ENCODE measurements at regions of chr3 and their contacts with region 1.

Region 1: DNA sequence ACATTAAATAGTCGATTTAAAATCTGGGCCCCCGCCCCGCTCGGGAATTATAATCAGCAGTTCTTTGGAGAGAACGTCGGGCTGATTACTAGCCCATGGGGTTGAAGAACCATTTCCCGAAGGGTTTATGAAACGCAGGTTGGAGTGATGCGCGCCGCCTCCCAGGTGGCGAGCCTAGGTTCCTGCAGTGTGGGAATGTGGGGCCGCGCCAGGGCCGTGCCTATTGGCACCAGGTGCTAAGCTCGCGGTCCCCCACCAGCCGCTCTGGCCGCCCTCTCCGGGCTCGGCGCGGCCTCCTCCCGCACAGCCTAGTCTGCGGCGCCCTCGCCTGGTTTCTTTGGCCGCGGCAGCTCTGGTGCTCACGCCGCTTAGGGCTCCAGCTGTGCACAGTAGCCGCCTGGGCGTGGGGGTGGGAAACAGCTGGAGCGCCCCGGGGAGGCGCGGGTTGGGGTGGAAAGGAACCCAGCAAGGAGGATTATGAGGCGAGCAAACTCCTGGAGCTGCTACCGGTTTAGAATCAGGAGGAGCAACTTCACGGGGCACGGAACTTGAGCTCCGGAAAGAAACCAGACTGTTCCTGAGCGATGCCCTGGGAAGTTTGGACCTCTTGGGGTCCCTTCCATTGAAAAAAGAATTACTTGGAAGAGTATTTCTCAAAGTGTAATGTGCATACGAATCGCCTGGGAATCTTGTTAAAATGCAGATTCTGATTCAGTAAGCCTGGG is 5.6 kb upstream of the MECOM start:
- DNase-seq: peak; percentile 69
- H3K4me3 ChIP-seq: peak overlapping the region; percentile 21
- H3K27ac ChIP-seq: no peak overlapping the region
- H3K4me1 ChIP-seq: peaks cover 16% of the 10 kb centered on the region
- H3K27me3 ChIP-seq: peaks cover 97% of the 10 kb centered on the region
- CTCF ChIP-seq: peak; percentile 82

Region 2: DNA sequence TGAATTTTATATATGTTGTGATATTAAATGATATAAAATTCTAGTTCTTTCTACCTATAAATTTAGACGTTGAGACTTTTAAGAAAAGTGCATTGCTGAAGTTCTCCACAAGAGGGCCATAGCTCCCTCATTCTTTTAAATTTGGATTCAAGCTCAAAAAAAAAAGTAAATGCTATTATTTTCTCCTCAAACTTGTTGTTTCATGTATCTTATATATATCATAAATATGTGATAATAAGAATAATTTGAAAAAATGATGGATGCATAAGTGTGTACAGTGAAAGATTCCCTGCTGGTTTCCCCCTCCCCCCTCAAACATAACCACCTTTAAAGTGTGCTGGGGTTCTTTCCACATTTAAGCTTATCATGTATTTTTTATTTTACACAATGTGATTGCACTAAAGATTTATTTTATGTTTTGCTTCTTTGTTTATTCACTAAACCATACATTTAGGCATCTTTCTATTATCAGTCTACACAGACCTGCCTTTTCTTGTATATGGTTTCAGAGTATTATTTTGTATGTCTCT is 804.0 kb before region 1 on chr3:
- CTCF ChIA-PET with region 1: interaction called, 6 read pairs
- POLR2A ChIA-PET with region 1: no interaction called
- intact Hi-C with region 1: loop called (anchors 5 kb)
- DNase-seq: peak; percentile 24
- H3K4me3 ChIP-seq: no peak overlapping the region
- H3K27ac ChIP-seq: no peak overlapping the region
- H3K4me1 ChIP-seq: no peaks in the 10 kb centered on the region
- H3K27me3 ChIP-seq: peaks cover 81% of the 10 kb centered on the region
- CTCF ChIP-seq: peak; percentile 81

Region 3: DNA sequence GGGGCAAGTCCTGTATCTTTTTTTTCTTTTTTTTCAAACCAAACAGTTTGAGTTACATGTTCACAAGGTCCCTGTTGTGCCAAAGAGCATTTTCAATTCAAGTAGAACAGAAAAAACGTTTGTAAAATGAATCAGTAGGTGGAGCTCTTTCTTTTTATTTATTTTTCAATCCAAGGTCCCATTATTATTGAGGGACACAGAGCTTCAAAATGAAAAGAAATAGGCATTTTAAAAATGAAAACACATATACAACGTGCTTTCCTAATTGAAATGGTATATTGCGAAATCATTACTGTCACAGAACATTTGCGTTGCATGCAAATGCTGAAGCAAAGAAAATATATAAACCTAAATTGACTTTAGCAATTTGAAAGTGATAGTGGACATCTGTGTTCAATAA is 716.6 kb before region 1 on chr3:
- CTCF ChIA-PET with region 1: no interaction called
- POLR2A ChIA-PET with region 1: no interaction called
- intact Hi-C with region 1: loop called (anchors 5 kb)
- DNase-seq: peak; percentile 4
- H3K4me3 ChIP-seq: no peak overlapping the region
- H3K27ac ChIP-seq: no peak overlapping the region
- H3K4me1 ChIP-seq: no peaks in the 10 kb centered on the region
- H3K27me3 ChIP-seq: peaks cover 6% of the 10 kb centered on the region
- CTCF ChIP-seq: peak; percentile 40

Region 4: GRCh38 chr3:169041677-169042171 is 627.4 kb before region 1 on chr3:
- CTCF ChIA-PET with region 1: no interaction called
- POLR2A ChIA-PET with region 1: no interaction called
- intact Hi-C with region 1: loop called (anchors 5 kb)
- DNase-seq: peak; percentile 31
- H3K4me3 ChIP-seq: no peak overlapping the region
- H3K27ac ChIP-seq: no peak overlapping the region
- H3K4me1 ChIP-seq: no peaks in the 10 kb centered on the region
- H3K27me3 ChIP-seq: peaks cover 35% of the 10 kb centered on the region
- CTCF ChIP-seq: peak; percentile 51; the same call in 1 of the 2 replicates

Region 5: DNA sequence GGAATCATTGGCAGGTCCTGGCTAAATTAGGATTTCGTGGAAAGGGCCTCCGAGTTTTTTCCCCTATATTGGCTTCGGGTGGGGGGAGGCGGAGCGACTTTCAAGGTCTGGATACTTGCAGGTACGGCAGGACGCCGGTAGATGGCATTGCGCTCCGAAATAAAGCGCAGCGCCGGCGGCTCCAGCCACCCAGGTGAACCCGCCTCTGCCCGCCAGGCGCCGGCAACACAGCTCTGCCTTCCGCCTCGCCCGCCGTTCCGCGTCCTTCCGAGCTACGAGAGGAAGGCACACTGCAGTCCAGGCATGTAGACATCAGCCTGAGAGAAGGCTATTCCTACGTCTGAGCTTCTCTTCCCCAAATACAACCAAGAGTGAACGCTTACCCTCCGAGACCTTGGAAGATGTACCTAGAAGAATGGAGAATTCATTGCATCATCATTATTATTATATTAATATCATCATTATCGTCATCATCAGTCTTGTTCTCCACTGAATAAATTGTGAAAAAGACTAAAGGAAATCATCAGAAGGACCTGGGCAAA is 519.7 kb before region 1 on chr3:
- CTCF ChIA-PET with region 1: interaction called, 13 read pairs
- POLR2A ChIA-PET with region 1: no interaction called
- intact Hi-C with region 1: loop called (anchors 5 kb)
- DNase-seq: peak; percentile 84
- H3K4me3 ChIP-seq: peak overlapping the region; percentile 18
- H3K27ac ChIP-seq: no peak overlapping the region
- H3K4me1 ChIP-seq: peaks cover 12% of the 10 kb centered on the region
- H3K27me3 ChIP-seq: peaks cover 96% of the 10 kb centered on the region
- CTCF ChIP-seq: peak; percentile 87

Region 6: DNA sequence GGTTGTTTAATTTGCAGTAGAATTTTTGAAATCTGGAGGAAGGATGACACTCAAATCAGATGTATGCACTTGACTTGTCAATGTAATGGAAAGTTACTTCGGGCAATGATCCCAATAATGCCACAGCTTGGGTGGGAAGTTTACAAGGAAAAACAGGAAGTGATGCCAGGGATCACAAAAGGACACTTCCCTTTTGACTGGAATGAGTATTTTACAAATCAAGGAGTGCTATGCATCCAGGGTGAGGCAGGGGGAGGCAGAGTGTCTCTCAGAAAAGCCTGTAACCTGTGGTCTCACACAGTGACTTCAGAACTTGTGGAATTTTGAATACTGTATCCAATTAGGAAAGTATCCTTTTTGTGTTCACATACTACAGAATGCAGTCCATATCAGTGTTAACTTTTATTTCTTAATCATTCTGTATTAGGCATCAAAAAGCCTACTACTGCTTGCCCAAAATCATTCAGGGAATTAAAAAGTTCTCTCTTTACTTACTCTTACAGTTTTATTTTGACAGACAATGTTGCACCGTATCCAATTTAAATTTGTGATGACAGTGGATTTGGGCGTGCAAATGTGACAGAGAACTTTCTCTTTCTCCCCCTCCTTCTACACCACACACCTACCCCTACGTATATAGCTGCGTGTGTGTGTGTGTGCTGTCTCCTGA is 450.7 kb before region 1 on chr3:
- CTCF ChIA-PET with region 1: no interaction called
- POLR2A ChIA-PET with region 1: no interaction called
- intact Hi-C with region 1: loop called (anchors 2 kb)
- DNase-seq: peak; percentile 87
- H3K4me3 ChIP-seq: no peak overlapping the region
- H3K27ac ChIP-seq: no peak overlapping the region
- H3K4me1 ChIP-seq: peaks cover 4% of the 10 kb centered on the region
- H3K27me3 ChIP-seq: no peaks in the 10 kb centered on the region
- CTCF ChIP-seq: peak; percentile 84

Region 7: DNA sequence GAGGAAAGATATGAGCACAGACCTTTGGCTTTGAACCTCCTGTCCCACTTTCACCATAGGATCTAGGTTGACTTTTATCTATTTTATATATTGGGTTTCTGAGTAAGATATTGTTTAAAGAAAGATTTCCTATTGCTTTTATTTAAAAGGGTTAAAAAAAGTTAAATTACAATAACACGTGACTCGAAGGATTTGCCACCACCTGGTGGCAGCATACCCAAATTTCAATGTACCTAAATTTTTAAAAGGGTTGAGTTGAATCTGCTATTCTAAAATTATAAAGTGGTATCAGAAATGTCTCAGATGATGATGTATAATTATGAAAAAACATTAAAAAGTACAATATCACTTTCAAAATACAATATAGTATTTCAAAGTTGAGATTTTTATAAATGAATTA is 374.0 kb before region 1 on chr3:
- CTCF ChIA-PET with region 1: no interaction called
- POLR2A ChIA-PET with region 1: no interaction called
- intact Hi-C with region 1: loop called (anchors 10 kb)
- DNase-seq: peak; percentile 41
- H3K4me3 ChIP-seq: no peak overlapping the region
- H3K27ac ChIP-seq: no peak overlapping the region
- H3K4me1 ChIP-seq: no peaks in the 10 kb centered on the region
- H3K27me3 ChIP-seq: peaks cover 17% of the 10 kb centered on the region
- CTCF ChIP-seq: peak; percentile 72

Region 8: GRCh38 chr3:169581633-169582032 is 87.5 kb before region 1 on chr3:
- CTCF ChIA-PET with region 1: no interaction called
- POLR2A ChIA-PET with region 1: no interaction called
- intact Hi-C with region 1: no loop called
- DNase-seq: no peak
- H3K4me3 ChIP-seq: no peak overlapping the region
- H3K27ac ChIP-seq: no peak overlapping the region
- H3K4me1 ChIP-seq: no peaks in the 10 kb centered on the region
- H3K27me3 ChIP-seq: peaks cover 42% of the 10 kb centered on the region
- CTCF ChIP-seq: no peak

Region 9: DNA sequence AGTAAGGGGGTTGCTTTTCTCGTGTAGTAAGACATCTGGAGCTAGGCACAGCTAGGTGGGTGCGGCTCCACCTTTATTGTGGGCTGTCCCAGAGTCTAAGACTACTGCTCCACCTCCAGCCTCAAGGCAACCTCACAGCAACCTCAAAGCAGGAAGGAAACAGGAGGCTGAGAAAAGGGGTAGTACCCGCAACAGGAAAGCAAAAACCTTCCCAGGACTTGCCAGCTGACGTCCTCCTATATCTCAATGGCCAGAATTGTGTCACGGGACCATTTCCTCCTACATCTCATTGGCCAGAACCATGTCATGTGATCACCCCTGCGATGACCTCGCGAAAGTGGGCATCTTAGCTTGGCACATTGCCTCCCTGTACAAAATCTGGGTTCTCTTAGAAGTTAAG is 364.4 kb after region 1 on chr3:
- CTCF ChIA-PET with region 1: no interaction called
- POLR2A ChIA-PET with region 1: no interaction called
- intact Hi-C with region 1: no loop called
- DNase-seq: no peak
- H3K4me3 ChIP-seq: no peak overlapping the region
- H3K27ac ChIP-seq: no peak overlapping the region
- H3K4me1 ChIP-seq: no peaks in the 10 kb centered on the region
- H3K27me3 ChIP-seq: no peaks in the 10 kb centered on the region
- CTCF ChIP-seq: no peak

Region 10: GRCh38 chr3:170584585-170585007 is 915.5 kb after region 1 on chr3:
- CTCF ChIA-PET with region 1: no interaction called
- POLR2A ChIA-PET with region 1: no interaction called
- intact Hi-C with region 1: no loop called
- DNase-seq: peak; percentile 72
- H3K4me3 ChIP-seq: no peak overlapping the region
- H3K27ac ChIP-seq: no peak overlapping the region
- H3K4me1 ChIP-seq: no peaks in the 10 kb centered on the region
- H3K27me3 ChIP-seq: peaks cover 93% of the 10 kb centered on the region
- CTCF ChIP-seq: no peak